Posterior vena cava (tissue), 2 donors: ENCODE measurements at regions of chr20 and their contacts with region 1.

Region 1: GRCh38 chr20:44800398-44801046 is 9.8 kb downstream of the RIMS4 start:
- DNase-seq: no peak

Region 2: DNA sequence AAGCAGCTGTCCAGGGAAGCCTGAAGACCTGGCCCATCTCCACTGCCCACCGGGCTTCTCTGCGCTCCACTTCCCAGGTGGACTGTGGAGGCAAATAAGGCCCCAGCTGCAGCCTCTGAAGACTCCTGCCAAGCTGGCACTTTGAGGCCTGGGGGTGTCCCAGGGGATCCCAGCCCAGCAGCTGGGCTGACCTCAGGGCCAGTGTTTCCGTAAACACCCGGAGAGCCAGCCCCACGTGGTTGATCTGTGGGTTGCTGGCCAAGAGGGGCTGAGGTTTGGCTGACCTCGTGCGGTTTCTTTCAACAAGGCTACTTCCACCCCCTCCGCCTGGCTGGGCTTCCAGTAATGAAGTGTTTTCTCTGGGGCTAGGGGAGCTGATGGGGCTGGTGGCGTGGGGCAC is 97.7 kb before region 1 on chr20:
- intact Hi-C with region 1: no loop called
- DNase-seq: peak; percentile 96

Region 3: DNA sequence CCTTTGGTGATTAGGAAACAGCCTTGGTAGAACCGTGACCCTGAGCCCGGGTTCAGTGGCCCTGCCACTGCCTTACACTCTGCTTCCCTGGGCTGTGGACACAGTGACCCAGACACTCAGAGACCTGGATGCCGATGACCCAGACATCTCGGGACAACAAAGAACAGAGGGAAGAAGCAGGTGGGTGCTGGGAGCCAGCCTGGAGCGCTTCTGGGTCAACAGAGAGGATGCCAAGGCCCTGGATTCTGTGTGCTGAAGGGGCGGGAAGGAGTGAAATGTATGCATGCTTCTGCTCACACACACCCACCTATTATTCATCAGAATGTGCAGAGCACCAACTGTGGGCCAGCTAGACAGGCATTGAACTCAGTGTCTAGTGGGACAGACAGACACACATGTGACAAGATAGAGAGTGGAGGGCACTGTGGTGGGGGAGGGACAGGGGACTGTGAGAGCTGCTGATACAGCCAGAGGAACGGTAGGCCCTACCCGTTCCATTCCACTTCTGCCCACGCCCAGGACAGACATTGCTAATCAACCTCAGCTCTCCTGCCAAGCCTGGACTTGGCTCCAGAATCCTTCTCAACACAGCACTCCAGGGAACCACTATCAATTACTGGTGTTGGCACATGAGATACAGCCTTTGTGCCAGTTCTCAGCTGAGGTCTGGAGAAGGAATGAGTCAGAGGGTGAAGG is 34.7 kb before region 1 on chr20:
- intact Hi-C with region 1: loop called in 1 of 2 experiments (anchors 1 kb)
- DNase-seq: no peak

Region 4: GRCh38 chr20:44861531-44862006 is 61.0 kb after region 1 on chr20:
- intact Hi-C with region 1: no loop called
- DNase-seq: peak; percentile 84